Heart right ventricle (tissue), 16 donors: ENCODE measurements at regions of chr5 and their contacts with region 1.

Region 1: DNA sequence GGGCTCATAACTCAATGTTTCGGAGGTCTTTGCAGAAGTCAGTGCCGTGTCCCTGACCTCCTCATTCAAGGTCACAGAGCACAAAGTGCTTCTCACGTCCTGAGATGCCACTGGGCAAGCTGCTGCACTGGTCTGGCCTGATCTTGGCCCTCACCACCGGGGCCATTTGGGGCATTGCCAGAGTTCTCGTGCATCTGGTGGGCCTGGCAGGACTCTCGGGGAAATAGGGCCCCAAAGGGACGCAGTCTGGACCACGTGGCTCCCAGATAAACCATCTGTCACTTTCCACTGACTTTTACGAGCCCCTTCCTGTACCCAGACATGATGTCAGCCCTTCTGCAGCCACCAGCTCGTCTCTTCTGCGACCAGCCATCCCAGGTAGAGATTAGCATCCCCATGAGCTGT is 54.8 kb downstream of the HRH2 start:
- DNase-seq: no peak
- ATAC-seq: peak in 5 of 8 donors; percentile 10 to 63 (median 37)
- H3K4me3 ChIP-seq: no peak overlapping the region
- H3K27ac ChIP-seq: peak overlapping the region in 6 of 10 donors; percentile 17 to 72 (median 37)
- H3K4me1 ChIP-seq: peaks cover 2 to 57% (median 25%) of the 10 kb centered on the region in 9 donors
- H3K27me3 ChIP-seq: no peaks in the 10 kb centered on the region
- CTCF ChIP-seq: no peak

Region 2: GRCh38 chr5:175383350-175383749 is 329.3 kb before region 1 on chr5:
- intact Hi-C with region 1: no loop called
- DNase-seq: no peak
- ATAC-seq: no peak
- H3K4me3 ChIP-seq: no peak overlapping the region
- H3K27ac ChIP-seq: no peak overlapping the region
- H3K4me1 ChIP-seq: no peaks in the 10 kb centered on the region
- H3K27me3 ChIP-seq: peaks cover 0 to 10% (median 0%) of the 10 kb centered on the region in 7 donors
- CTCF ChIP-seq: no peak

Region 3: DNA sequence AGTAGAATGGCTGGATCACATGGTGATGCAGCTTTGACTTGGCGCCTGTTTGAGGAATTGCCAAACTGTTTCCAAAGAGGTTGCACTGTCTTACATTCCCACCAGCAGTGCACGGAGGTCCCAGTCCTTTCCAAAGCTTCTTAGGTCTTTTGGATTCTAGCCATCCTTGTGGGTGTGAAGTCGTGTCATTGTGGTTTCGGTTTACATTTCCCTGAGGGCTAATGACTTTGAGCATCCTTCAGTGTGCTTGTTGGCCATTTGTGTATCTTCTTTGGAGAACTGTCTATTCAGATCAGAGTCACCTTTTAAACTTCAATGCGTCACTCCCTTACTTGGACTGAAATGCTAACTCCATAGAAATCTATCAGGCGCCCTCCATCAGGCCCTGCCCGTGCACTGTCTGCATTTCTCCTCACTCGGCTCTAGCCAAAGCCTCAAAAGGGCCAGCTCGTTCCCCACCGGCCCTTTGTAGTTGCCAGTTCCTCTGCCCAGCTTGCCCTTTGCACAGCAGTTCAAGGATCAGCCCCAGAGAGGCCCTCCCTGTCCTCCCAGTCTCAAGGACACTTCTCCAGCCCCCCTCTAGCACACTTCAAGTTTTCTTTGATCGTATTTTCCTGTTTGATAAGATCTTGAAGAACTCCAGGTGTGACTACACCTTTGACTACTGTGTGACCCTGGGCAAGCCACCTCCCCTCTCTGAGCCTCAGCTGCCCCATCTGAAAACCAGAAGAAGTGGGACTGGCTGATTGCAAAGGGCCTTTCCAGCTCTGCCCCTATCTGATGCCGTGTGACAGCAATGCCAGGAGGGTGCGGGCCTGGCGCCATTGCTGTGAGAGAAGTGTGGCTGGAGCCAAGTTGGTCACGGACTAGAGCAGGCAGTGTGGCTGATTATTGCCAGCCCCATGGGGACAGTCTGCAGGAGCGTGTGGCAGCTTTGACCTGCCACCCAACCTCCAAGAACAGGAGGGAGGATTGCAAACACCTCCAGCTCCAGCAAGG is 49.2 kb before region 1 on chr5:
- intact Hi-C with region 1: loop called in 4 of 10 experiments (anchors 2 to 5 kb)
- DNase-seq: peak; percentile 71 to 76
- ATAC-seq: peak; percentile 77 to 97 (median 91)
- H3K4me3 ChIP-seq: no peak overlapping the region
- H3K27ac ChIP-seq: peak overlapping the region in 9 of 10 donors; percentile 25 to 79 (median 65)
- H3K4me1 ChIP-seq: peaks cover 5 to 78% (median 40%) of the 10 kb centered on the region in 9 donors
- H3K27me3 ChIP-seq: peaks cover 0 to 12% (median 0%) of the 10 kb centered on the region in 7 donors
- CTCF ChIP-seq: no peak